Dorsolateral prefrontal cortex (tissue), 120 donors: ENCODE measurements at regions of chr14 and their contacts with region 1.

Region 1: GRCh38 chr14:69153131-69153872 is 383 bp upstream of the DCAF5 start:
- DNase-seq: peak; percentile 69 to 91 (median 88)
- H3K4me3 ChIP-seq: peak overlapping the region; percentile 57 to 99 (median 92)
- H3K27ac ChIP-seq: peak overlapping the region; percentile 47 to 96 (median 91)
- H3K27me3 ChIP-seq: no peaks in the 10 kb centered on the region
- CTCF ChIP-seq: peak in 9 of 56 donors; percentile 14 to 40 (median 22)

Region 2: GRCh38 chr14:68854421-68854820 is 298.9 kb before region 1 on chr14:
- intact Hi-C with region 1: no loop called
- DNase-seq: no peak
- H3K4me3 ChIP-seq: no peak overlapping the region
- H3K27ac ChIP-seq: no peak overlapping the region
- H3K27me3 ChIP-seq: no peaks in the 10 kb centered on the region
- CTCF ChIP-seq: no peak

Region 3: GRCh38 chr14:69129264-69129880 is 23.9 kb before region 1 on chr14:
- intact Hi-C with region 1: loop called in 1 of 2 experiments (anchors 1 kb)
- DNase-seq: peak in 9 of 10 donors; percentile 67 to 81 (median 69)
- H3K4me3 ChIP-seq: peak overlapping the region in 5 of 59 donors; percentile 1 to 19 (median 12)
- H3K27ac ChIP-seq: peak overlapping the region in 28 of 59 donors; percentile 1 to 76 (median 38)
- H3K27me3 ChIP-seq: no peaks in the 10 kb centered on the region
- CTCF ChIP-seq: peak; percentile 71 to 95 (median 90)

Region 4: GRCh38 chr14:69191340-69192111 is 38.2 kb after region 1 on chr14 and contains the start of gene EXD2:
- intact Hi-C with region 1: loop called (anchors 1 kb)
- DNase-seq: peak; percentile 72 to 95 (median 92)
- H3K4me3 ChIP-seq: peak within 1 kb of the TSS; percentile 66 to 99 (median 88)
- H3K27ac ChIP-seq: peak within 1 kb of the TSS in 55 of 59 donors; percentile 3 to 88 (median 63)
- H3K27me3 ChIP-seq: no peaks in the 10 kb centered on the region
- CTCF ChIP-seq: peak in 24 of 56 donors; percentile 9 to 48 (median 18)
- total RNA-seq, gene EXD2: 32.8 to 68.9 (median 44.5) TPM

Region 5: DNA sequence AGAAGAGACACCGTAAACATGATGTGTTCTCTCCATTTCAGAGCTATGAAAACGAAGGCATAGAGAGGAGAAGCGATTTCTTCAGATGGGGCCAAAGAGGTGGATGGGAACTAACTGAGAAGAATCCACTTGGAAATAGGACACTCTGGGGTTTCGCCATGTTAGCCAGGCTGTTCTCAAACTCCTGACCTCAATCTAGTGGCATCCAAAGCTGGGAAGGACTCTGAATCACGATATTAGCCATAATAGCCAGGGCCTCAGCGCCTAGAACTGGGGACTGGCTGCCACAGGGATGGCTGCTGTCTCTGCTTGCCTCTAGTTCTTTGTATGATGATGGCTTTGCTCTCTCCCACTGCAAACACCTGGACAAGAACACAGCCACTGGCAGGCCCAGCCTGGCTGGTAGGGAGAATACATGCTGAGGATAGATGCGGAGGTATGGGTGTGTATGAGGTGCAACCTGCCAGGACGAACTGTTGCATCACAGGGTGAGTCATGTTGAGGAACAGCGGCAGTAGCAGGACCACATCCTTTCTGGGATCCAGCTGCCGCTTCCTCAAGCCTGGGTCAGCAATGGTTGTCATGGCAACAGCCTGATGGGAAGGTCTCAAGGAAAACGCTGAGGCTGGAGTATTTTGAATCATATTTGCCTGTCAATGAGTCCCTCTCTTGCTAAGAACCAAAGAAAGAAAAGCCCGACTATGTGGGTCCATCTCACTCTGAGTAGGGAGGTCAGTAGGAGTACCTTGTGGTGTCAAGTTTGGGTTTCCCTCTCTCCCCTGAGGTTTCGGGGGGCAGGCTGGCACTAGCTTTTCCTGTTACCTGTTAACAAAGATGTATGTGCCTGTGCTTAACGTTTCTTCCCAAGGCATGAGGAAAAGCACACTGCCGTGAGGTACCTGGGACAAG is 390.3 kb after region 1 on chr14:
- intact Hi-C with region 1: no loop called
- DNase-seq: peak in 9 of 10 donors; percentile 7 to 84 (median 65)
- H3K4me3 ChIP-seq: no peak overlapping the region
- H3K27ac ChIP-seq: peak overlapping the region in 53 of 59 donors; percentile 3 to 88 (median 61)
- H3K27me3 ChIP-seq: peaks cover 0 to 8% (median 0%) of the 10 kb centered on the region in 45 donors
- CTCF ChIP-seq: no peak

Region 6: GRCh38 chr14:69766984-69767368 is 613.7 kb after region 1 on chr14 and contains the start of gene SRSF5:
- intact Hi-C with region 1: loop called in 1 of 2 experiments (anchors 2 kb)
- DNase-seq: peak; percentile 95 to 98 (median 97)
- H3K4me3 ChIP-seq: peak within 1 kb of the TSS; percentile 75 to 100 (median 92)
- H3K27ac ChIP-seq: peak within 1 kb of the TSS; percentile 93 to 100 (median 100)
- H3K27me3 ChIP-seq: no peaks in the 10 kb centered on the region
- CTCF ChIP-seq: peak in 5 of 56 donors; percentile 8 to 22 (median 17)
- total RNA-seq, gene SRSF5: 348 to 822 (median 535) TPM